Sigmoid colon (tissue), 7 donors: ENCODE measurements at regions of chr15 and their contacts with region 1.

Region 1: DNA sequence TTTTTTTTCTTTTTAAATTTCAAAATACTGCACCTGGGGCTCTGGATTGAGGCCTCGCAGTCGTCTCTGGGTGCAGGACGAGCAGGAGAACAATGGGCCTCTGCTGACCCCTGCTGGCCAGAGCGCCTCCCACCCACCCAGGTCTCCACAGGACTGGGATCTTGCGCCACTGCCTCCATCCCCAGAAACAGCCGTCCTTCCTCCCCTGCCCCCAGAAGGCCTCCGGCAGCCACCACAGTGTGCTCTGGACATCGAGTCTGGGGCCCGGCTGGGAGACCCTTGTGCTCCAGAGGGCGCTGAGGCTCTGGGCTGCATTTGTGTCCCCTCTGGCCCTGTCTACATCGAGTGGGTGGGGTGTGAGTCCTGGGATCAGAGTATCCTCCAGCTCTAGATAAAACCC is 6.6 kb upstream of the ACSBG1 start:
- DNase-seq: peak; percentile 93
- H3K4me3 ChIP-seq: no peak overlapping the region
- H3K27ac ChIP-seq: no peak overlapping the region
- H3K4me1 ChIP-seq: peaks cover 0 to 11% (median 7%) of the 10 kb centered on the region in 4 donors
- H3K27me3 ChIP-seq: no peaks in the 10 kb centered on the region
- CTCF ChIP-seq: peak; percentile 75 to 83 (median 80)
- EP300 ChIP-seq: no peak
- POLR2A ChIP-seq: no peak

Region 2: DNA sequence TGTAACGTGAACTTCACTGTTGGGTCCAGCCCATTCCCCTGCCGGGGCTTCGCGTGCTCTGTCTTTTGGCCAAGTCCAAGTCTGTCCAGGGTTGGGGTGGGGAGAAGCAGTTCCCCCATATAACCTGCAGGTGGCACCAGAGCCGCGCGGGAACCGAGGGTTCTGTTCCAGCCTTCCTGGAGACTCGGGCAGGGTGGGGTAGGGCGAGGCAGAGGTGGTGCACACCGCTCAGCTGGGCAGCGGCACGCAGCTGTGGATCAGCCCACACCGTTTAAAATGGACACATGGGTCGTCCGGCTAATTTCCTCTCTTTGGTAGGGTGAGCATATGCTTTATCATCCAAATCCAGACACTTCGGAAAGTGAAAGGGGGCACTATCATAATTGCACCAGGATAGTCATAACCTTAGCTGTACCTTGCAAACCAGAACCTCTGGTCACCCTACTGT is 281.6 kb before region 1 on chr15:
- intact Hi-C with region 1: loop called (anchors 2 kb)
- DNase-seq: peak; percentile 88
- H3K4me3 ChIP-seq: peak overlapping the region in 3 of 4 donors; percentile 23 to 30 (median 24)
- H3K27ac ChIP-seq: no peak overlapping the region
- H3K4me1 ChIP-seq: peaks cover 0 to 3% (median 0%) of the 10 kb centered on the region in 4 donors
- H3K27me3 ChIP-seq: no peaks in the 10 kb centered on the region
- CTCF ChIP-seq: peak; percentile 90 to 95 (median 92)
- EP300 ChIP-seq: no peak
- POLR2A ChIP-seq: no peak

Region 3: GRCh38 chr15:78000091-78000926 is 240.7 kb before region 1 on chr15:
- intact Hi-C with region 1: loop called (anchors 5 kb)
- DNase-seq: peak; percentile 88
- H3K4me3 ChIP-seq: no peak overlapping the region
- H3K27ac ChIP-seq: no peak overlapping the region
- H3K4me1 ChIP-seq: peaks cover 0 to 34% (median 27%) of the 10 kb centered on the region in 4 donors
- H3K27me3 ChIP-seq: no peaks in the 10 kb centered on the region
- CTCF ChIP-seq: peak; percentile 43 to 58 (median 49)
- EP300 ChIP-seq: no peak
- POLR2A ChIP-seq: no peak

Region 4: DNA sequence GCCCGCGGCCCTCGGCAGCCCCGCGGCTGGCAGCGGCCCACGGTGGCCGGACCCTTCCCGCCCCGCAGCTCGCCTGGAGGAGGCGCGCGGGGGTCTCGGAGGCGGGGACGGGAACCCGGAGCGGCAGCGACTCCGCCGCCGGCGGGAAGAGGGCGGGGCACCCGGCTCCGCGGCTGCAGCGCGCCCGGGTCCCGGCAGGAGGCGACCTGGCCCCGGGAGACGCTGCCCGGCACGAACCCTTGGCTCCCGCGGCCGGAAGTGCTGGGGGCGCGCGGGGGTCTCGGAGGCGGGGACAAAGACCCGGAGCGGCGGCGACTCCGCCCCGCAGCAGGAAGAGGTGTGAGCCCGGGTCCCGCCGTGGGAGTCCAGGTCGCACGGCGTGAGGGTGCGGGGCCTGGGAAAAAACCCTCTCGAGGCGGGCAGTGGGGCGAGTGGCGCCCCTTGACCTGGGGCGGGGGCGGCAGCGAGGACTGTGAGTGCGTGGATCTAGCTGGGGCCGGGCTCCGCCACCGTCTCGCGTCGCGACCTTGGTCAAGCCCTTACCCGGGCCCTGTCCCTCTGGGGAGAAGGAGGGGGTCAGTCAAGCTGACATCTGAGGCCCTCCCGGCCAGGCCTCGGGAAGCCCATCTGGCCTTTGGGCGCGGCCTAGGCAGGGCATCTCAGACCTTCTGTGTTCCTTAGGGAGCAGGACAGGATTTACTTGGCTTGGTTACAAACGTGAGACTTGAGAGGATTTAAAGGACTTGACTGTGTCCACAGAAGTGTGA is 109.5 kb before region 1 on chr15 and contains the start of gene CIB2:
- intact Hi-C with region 1: loop called (anchors 5 kb)
- DNase-seq: peak; percentile 84
- H3K4me3 ChIP-seq: peak within 1 kb of the TSS; percentile 64 to 89 (median 68)
- H3K27ac ChIP-seq: peak within 1 kb of the TSS; percentile 81 to 86 (median 83)
- H3K4me1 ChIP-seq: peaks cover 0 to 16% (median 13%) of the 10 kb centered on the region in 4 donors
- H3K27me3 ChIP-seq: no peaks in the 10 kb centered on the region
- CTCF ChIP-seq: peak; percentile 36 to 79 (median 42)
- EP300 ChIP-seq: no peak
- POLR2A ChIP-seq: no peak
- total RNA-seq, gene CIB2: 3.5 to 11.7 (median 10.4) TPM

Region 5: GRCh38 chr15:78177447-78177873 is 63.5 kb before region 1 on chr15:
- intact Hi-C with region 1: loop called (anchors 1 kb)
- DNase-seq: no peak
- H3K4me3 ChIP-seq: no peak overlapping the region
- H3K27ac ChIP-seq: no peak overlapping the region
- H3K4me1 ChIP-seq: no peaks in the 10 kb centered on the region
- H3K27me3 ChIP-seq: no peaks in the 10 kb centered on the region
- CTCF ChIP-seq: peak; percentile 57 to 67 (median 66)
- EP300 ChIP-seq: no peak
- POLR2A ChIP-seq: no peak

Region 6: GRCh38 chr15:79492065-79492464 is 1251.1 kb after region 1 on chr15:
- intact Hi-C with region 1: no loop called
- DNase-seq: no peak
- H3K4me3 ChIP-seq: no peak overlapping the region
- H3K27ac ChIP-seq: no peak overlapping the region
- H3K4me1 ChIP-seq: no peaks in the 10 kb centered on the region
- H3K27me3 ChIP-seq: peaks cover 0 to 4% (median 0%) of the 10 kb centered on the region in 3 donors
- CTCF ChIP-seq: no peak
- EP300 ChIP-seq: no peak
- POLR2A ChIP-seq: no peak